HEK293T (cell line): ENCODE measurements at regions of chr11 and their contacts with region 1.

Region 1: GRCh38 chr11:61947486-61948210 is 2.5 kb upstream of the BEST1 start:
- DNase-seq: peak; percentile 87

Region 2: GRCh38 chr11:61899146-61899841 is 48.4 kb before region 1 on chr11:
- CTCF ChIA-PET with region 1: interaction called, 77 read pairs
- POLR2A ChIA-PET with region 1: interaction called, 8 read pairs
- DNase-seq: peak; percentile 95

Region 3: DNA sequence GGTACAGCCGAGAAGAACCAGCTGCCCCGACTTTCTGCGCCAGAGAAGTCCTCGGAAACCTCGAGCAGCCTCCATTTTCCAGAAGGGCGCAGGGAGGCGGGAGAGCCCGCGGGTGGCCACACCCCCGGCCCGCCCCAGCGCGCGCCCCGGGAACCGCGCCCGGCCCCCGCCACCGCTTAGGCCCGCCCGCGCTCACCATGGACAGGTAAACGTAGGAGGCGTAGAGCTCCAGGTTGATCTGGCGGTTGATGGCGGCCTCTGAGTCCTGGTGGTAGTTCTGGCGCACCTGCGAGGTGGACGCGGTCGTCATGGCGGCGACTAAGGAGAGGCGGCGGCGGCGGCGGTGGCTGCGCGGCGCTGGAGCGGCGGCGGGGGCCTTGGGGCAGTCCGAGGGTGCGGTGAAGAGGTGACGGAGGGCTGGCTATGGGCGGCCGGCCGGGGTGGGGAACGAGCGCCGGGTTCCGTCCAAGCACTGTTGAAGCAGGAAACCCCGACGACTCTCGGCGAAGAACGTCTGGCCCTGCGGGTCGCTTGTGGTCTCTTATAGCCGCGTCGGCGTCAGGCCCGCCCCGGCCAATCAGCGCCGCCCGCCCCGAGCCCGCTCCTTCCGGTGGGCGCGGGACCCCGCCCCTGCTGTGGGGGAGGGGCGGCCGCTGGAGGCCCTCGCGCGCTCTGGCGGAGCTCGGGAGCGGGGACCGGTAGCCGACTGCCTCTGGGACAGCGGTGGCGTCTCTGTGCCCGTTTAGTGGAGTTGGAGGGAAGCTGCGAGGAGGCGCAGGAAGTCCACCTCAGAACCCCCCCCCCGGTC is 19.7 kb after region 1 on chr11 and contains the start of gene FTH1:
- CTCF ChIA-PET with region 1: no interaction called
- POLR2A ChIA-PET with region 1: interaction called, 68 read pairs
- DNase-seq: peak; percentile 92

Region 4: GRCh38 chr11:62054484-62055121 is 107.0 kb after region 1 on chr11:
- CTCF ChIA-PET with region 1: interaction called, 11 read pairs
- POLR2A ChIA-PET with region 1: interaction called, 3 read pairs
- DNase-seq: peak; percentile 17

Region 5: DNA sequence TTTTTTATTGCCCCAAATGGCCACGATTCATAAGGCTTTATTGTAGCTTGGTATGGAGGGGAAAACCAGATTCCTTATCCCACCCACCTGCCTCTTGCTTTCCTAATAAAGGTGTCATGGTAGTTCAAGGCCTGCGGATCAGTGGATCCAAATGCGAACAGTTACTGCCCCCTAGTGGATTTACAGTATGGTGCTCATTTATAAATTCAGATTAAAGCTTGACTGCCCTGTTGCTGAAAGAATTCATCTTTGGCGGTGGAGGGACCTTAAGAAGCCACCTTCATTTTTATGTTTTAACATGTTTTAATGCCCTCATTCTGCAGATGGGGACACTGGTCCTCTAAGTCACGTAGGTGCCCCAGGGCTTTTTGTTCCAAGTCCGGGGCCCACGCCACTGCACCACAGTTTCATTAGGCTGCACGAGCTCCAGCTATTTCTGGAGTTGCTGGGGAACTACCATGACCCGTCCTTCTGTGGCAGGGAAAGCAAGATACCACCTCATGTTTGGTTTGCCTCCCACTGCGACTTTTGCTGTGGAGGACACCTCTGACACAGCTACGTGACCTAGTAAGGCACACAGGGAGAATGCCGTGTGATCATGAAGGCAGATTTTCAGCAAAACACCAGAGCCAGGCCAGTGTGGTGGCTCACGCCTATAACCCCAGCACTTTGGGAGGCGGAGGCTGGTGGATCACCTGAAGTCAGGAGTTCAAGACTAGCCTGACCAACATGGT is 160.5 kb after region 1 on chr11:
- CTCF ChIA-PET with region 1: interaction called, 15 read pairs
- POLR2A ChIA-PET with region 1: no interaction called
- DNase-seq: peak; percentile 60